CD8-positive, alpha-beta T cell (primary cell): ENCODE measurements at regions of chr12 and their contacts with region 1.

Region 1: GRCh38 chr12:51172515-51173431 is at the start of gene TFCP2:
- DNase-seq: peak; percentile 86 to 98 (median 93)
- ATAC-seq: peak; percentile 98
- H3K4me3 ChIP-seq: peak within 1 kb of the TSS; percentile 86 to 91
- H3K4me3 Mint-ChIP-seq: peak within 1 kb of the TSS; percentile 75
- H3K27ac ChIP-seq: peak within 1 kb of the TSS; percentile 95 to 98
- H3K27ac Mint-ChIP-seq: peak within 1 kb of the TSS; percentile 78
- H3K4me1 ChIP-seq: peaks cover 27% of the 10 kb centered on the region
- H3K4me1 Mint-ChIP-seq: peaks cover 20% of the 10 kb centered on the region
- H3K27me3 ChIP-seq: no peaks in the 10 kb centered on the region
- H3K27me3 Mint-ChIP-seq: no peaks in the 10 kb centered on the region
- CTCF ChIP-seq: no peak
- total RNA-seq, gene TFCP2: 8.6 to 9.5 TPM

Region 2: GRCh38 chr12:51047655-51048540 is 124.9 kb before region 1 on chr12 and contains the start of gene LETMD1:
- CTCF ChIA-PET with region 1: no interaction called
- POLR2A ChIA-PET with region 1: interaction called, 3 read pairs
- intact Hi-C with region 1: loop called (anchors 1 to 5 kb)
- DNase-seq: peak; percentile 83 to 99 (median 88)
- ATAC-seq: peak; percentile 94
- H3K4me3 ChIP-seq: peak within 1 kb of the TSS; percentile 79 to 83
- H3K4me3 Mint-ChIP-seq: peak within 1 kb of the TSS; percentile 98
- H3K27ac ChIP-seq: peak within 1 kb of the TSS; percentile 74 to 96
- H3K27ac Mint-ChIP-seq: peak within 1 kb of the TSS; percentile 97
- H3K4me1 ChIP-seq: peaks cover 23% of the 10 kb centered on the region
- H3K4me1 Mint-ChIP-seq: peaks cover 34% of the 10 kb centered on the region
- H3K27me3 ChIP-seq: no peaks in the 10 kb centered on the region
- H3K27me3 Mint-ChIP-seq: no peaks in the 10 kb centered on the region
- CTCF ChIP-seq: peak; percentile 95
- total RNA-seq, gene LETMD1: 51.3 to 55.2 TPM

Region 3: GRCh38 chr12:51083126-51083833 is 89.5 kb before region 1 on chr12 and contains the start of gene CSRNP2:
- CTCF ChIA-PET with region 1: no interaction called
- POLR2A ChIA-PET with region 1: no interaction called
- intact Hi-C with region 1: loop called (anchors 1 to 2 kb)
- DNase-seq: peak; percentile 90 to 97 (median 94)
- ATAC-seq: peak; percentile 99
- H3K4me3 ChIP-seq: peak within 1 kb of the TSS; percentile 88
- H3K4me3 Mint-ChIP-seq: peak within 1 kb of the TSS; percentile 94
- H3K27ac ChIP-seq: peak within 1 kb of the TSS; percentile 61 to 62
- H3K27ac Mint-ChIP-seq: peak within 1 kb of the TSS; percentile 91
- H3K4me1 ChIP-seq: peaks cover 12% of the 10 kb centered on the region
- H3K4me1 Mint-ChIP-seq: peaks cover 36% of the 10 kb centered on the region
- H3K27me3 ChIP-seq: no peaks in the 10 kb centered on the region
- H3K27me3 Mint-ChIP-seq: no peaks in the 10 kb centered on the region
- CTCF ChIP-seq: no peak
- total RNA-seq, gene CSRNP2: 19.5 to 19.9 TPM

Region 4: GRCh38 chr12:51238510-51239334 is 65.9 kb after region 1 on chr12 and contains the start of gene DAZAP2:
- CTCF ChIA-PET with region 1: no interaction called
- POLR2A ChIA-PET with region 1: interaction called, 4 read pairs
- intact Hi-C with region 1: loop called (anchors 1 kb)
- DNase-seq: peak; percentile 89 to 98 (median 96)
- ATAC-seq: peak; percentile 88
- H3K4me3 ChIP-seq: peak within 1 kb of the TSS; percentile 80 to 99
- H3K4me3 Mint-ChIP-seq: peak within 1 kb of the TSS; percentile 94
- H3K27ac ChIP-seq: peak within 1 kb of the TSS; percentile 97 to 100
- H3K27ac Mint-ChIP-seq: peak within 1 kb of the TSS; percentile 100
- H3K4me1 ChIP-seq: peaks cover 32% of the 10 kb centered on the region
- H3K4me1 Mint-ChIP-seq: peaks cover 45% of the 10 kb centered on the region
- H3K27me3 ChIP-seq: no peaks in the 10 kb centered on the region
- H3K27me3 Mint-ChIP-seq: no peaks in the 10 kb centered on the region
- CTCF ChIP-seq: no peak
- total RNA-seq, gene DAZAP2: 340 to 343 TPM

Region 5: GRCh38 chr12:51270067-51270970 is 97.5 kb after region 1 on chr12 and contains the start of gene SMAGP:
- CTCF ChIA-PET with region 1: no interaction called
- POLR2A ChIA-PET with region 1: no interaction called
- intact Hi-C with region 1: loop called in 1 of 2 experiments (anchors 1 kb)
- DNase-seq: peak in 8 of 9 experiments; percentile 28 to 76 (median 52)
- ATAC-seq: peak; percentile 50
- H3K4me3 ChIP-seq: peak within 1 kb of the TSS; percentile 54 to 71
- H3K4me3 Mint-ChIP-seq: peak within 1 kb of the TSS; percentile 90
- H3K27ac ChIP-seq: peak within 1 kb of the TSS; percentile 42 to 58
- H3K27ac Mint-ChIP-seq: peak within 1 kb of the TSS; percentile 84
- H3K4me1 ChIP-seq: peaks cover 16% of the 10 kb centered on the region
- H3K4me1 Mint-ChIP-seq: peaks cover 23% of the 10 kb centered on the region
- H3K27me3 ChIP-seq: no peaks in the 10 kb centered on the region
- H3K27me3 Mint-ChIP-seq: no peaks in the 10 kb centered on the region
- CTCF ChIP-seq: no peak
- total RNA-seq, gene SMAGP: 1.9 to 2.3 TPM

Region 6: GRCh38 chr12:51311389-51311788 is 138.6 kb after region 1 on chr12:
- CTCF ChIA-PET with region 1: no interaction called
- POLR2A ChIA-PET with region 1: no interaction called
- intact Hi-C with region 1: no loop called
- DNase-seq: no peak
- ATAC-seq: no peak
- H3K4me3 ChIP-seq: no peak overlapping the region
- H3K4me3 Mint-ChIP-seq: no peak overlapping the region
- H3K27ac ChIP-seq: peak overlapping the region in 1 of 2 experiments; percentile 36
- H3K27ac Mint-ChIP-seq: peak overlapping the region; percentile 67
- H3K4me1 ChIP-seq: peaks cover 66% of the 10 kb centered on the region
- H3K4me1 Mint-ChIP-seq: peaks cover 76% of the 10 kb centered on the region
- H3K27me3 ChIP-seq: no peaks in the 10 kb centered on the region
- H3K27me3 Mint-ChIP-seq: no peaks in the 10 kb centered on the region
- CTCF ChIP-seq: no peak

Region 7: DNA sequence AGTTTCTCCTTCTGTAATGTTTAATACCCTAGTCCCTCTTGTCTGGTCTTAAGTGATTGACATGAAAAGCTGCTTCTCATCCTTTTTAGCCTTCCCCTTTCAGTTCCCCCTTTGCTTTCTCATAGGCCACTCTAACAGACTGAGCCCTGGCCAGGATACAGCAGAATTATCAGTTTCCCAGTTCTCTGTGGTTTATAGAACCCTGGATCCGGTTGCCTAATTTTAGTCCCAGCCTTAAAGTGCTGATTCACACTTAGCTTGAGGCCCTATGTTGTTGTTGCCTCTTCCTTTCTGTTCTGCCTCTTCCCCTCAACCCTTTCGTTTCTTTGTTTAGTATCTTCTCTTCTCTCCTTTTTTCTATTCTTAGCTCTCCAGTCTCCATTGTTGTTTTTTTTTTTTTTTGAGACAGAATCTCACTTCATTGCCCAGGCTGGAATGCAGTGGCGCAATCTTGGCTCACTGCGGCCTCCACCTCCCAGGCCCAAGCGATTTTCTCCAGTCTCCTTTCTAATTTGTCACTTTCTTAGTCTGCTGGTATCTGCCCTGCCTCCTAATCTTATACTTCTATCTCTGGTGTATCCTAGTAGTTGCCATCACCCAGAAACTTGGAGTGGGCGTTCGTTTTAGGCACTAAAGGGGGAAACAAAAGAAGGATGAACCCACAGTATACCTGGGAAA is 154.1 kb after region 1 on chr12:
- CTCF ChIA-PET with region 1: no interaction called
- POLR2A ChIA-PET with region 1: no interaction called
- intact Hi-C with region 1: loop called (anchors 5 kb)
- DNase-seq: peak in 2 of 9 experiments; percentile 17 to 49
- ATAC-seq: no peak
- H3K4me3 ChIP-seq: no peak overlapping the region
- H3K4me3 Mint-ChIP-seq: peak overlapping the region; percentile 35
- H3K27ac ChIP-seq: peak overlapping the region in 1 of 2 experiments; percentile 56
- H3K27ac Mint-ChIP-seq: peak overlapping the region; percentile 91
- H3K4me1 ChIP-seq: peaks cover 63% of the 10 kb centered on the region
- H3K4me1 Mint-ChIP-seq: peaks cover 77% of the 10 kb centered on the region
- H3K27me3 ChIP-seq: no peaks in the 10 kb centered on the region
- H3K27me3 Mint-ChIP-seq: no peaks in the 10 kb centered on the region
- CTCF ChIP-seq: no peak

Region 8: GRCh38 chr12:51368640-51369517 is 196.1 kb after region 1 on chr12:
- CTCF ChIA-PET with region 1: no interaction called
- POLR2A ChIA-PET with region 1: interaction called, 3 read pairs
- intact Hi-C with region 1: loop called in 1 of 2 experiments (anchors 1 kb)
- DNase-seq: peak; percentile 78 to 98 (median 88)
- ATAC-seq: peak; percentile 93
- H3K4me3 ChIP-seq: peak overlapping the region; percentile 38 to 49
- H3K4me3 Mint-ChIP-seq: peak overlapping the region; percentile 63
- H3K27ac ChIP-seq: peak overlapping the region; percentile 32 to 66
- H3K27ac Mint-ChIP-seq: peak overlapping the region; percentile 75
- H3K4me1 ChIP-seq: peaks cover 36% of the 10 kb centered on the region
- H3K4me1 Mint-ChIP-seq: peaks cover 49% of the 10 kb centered on the region
- H3K27me3 ChIP-seq: no peaks in the 10 kb centered on the region
- H3K27me3 Mint-ChIP-seq: no peaks in the 10 kb centered on the region
- CTCF ChIP-seq: no peak